Activated B cell treated with CpG ODN at 0.5 μM for 24 hours (primary cell): ENCODE measurements at regions of chr1 and their contacts with region 1.

Region 1: GRCh38 chr1:209627732-209628196 is 24.5 kb downstream of the LAMB3 start:
- DNase-seq: peak; percentile 71
- ATAC-seq: peak; percentile 91
- H3K4me3 Mint-ChIP-seq: no peak overlapping the region
- H3K27ac Mint-ChIP-seq: no peak overlapping the region
- H3K4me1 Mint-ChIP-seq: no peaks in the 10 kb centered on the region
- H3K27me3 Mint-ChIP-seq: peaks cover 10% of the 10 kb centered on the region
- CTCF ChIP-seq: peak; percentile 85

Region 2: GRCh38 chr1:209565759-209566678 is 61.7 kb before region 1 on chr1:
- CTCF ChIA-PET with region 1: interaction called, 11 read pairs
- POLR2A ChIA-PET with region 1: no interaction called
- intact Hi-C with region 1: loop called (anchors 1 kb)
- DNase-seq: peak; percentile 23
- ATAC-seq: peak; percentile 77
- H3K4me3 Mint-ChIP-seq: no peak overlapping the region
- H3K27ac Mint-ChIP-seq: no peak overlapping the region
- H3K4me1 Mint-ChIP-seq: peaks cover 6% of the 10 kb centered on the region
- H3K27me3 Mint-ChIP-seq: peaks cover 52% of the 10 kb centered on the region
- CTCF ChIP-seq: no peak

Region 3: GRCh38 chr1:209576798-209577197 is 51.0 kb before region 1 on chr1:
- CTCF ChIA-PET with region 1: interaction called, 4 read pairs
- POLR2A ChIA-PET with region 1: no interaction called
- intact Hi-C with region 1: loop called (anchors 1 kb)
- DNase-seq: peak; percentile 49
- ATAC-seq: peak; percentile 79
- H3K4me3 Mint-ChIP-seq: no peak overlapping the region
- H3K27ac Mint-ChIP-seq: no peak overlapping the region
- H3K4me1 Mint-ChIP-seq: no peaks in the 10 kb centered on the region
- H3K27me3 Mint-ChIP-seq: peaks cover 16% of the 10 kb centered on the region
- CTCF ChIP-seq: peak; percentile 54

Region 4: GRCh38 chr1:209601809-209602657 is 25.7 kb before region 1 on chr1:
- CTCF ChIA-PET with region 1: interaction called, 6 read pairs
- POLR2A ChIA-PET with region 1: no interaction called
- intact Hi-C with region 1: loop called (anchors 1 kb)
- DNase-seq: no peak
- ATAC-seq: peak; percentile 69
- H3K4me3 Mint-ChIP-seq: no peak overlapping the region
- H3K27ac Mint-ChIP-seq: no peak overlapping the region
- H3K4me1 Mint-ChIP-seq: no peaks in the 10 kb centered on the region
- H3K27me3 Mint-ChIP-seq: peaks cover 16% of the 10 kb centered on the region
- CTCF ChIP-seq: no peak

Region 5: GRCh38 chr1:209651148-209651547 is 23.4 kb after region 1 on chr1:
- CTCF ChIA-PET with region 1: no interaction called
- POLR2A ChIA-PET with region 1: no interaction called
- intact Hi-C with region 1: no loop called
- DNase-seq: no peak
- ATAC-seq: peak; percentile 77
- H3K4me3 Mint-ChIP-seq: no peak overlapping the region
- H3K27ac Mint-ChIP-seq: no peak overlapping the region
- H3K4me1 Mint-ChIP-seq: no peaks in the 10 kb centered on the region
- H3K27me3 Mint-ChIP-seq: peaks cover 3% of the 10 kb centered on the region
- CTCF ChIP-seq: no peak